Endothelial cell of umbilical vein (primary cell): ENCODE measurements at regions of chr4 and their contacts with region 1.

Region 1: GRCh38 chr4:109815151-109816081 is at the start of gene GAR1:
- DNase-seq: peak; percentile 94
- H3K4me3 ChIP-seq: peak within 1 kb of the TSS; percentile 35 to 92 (median 70)
- H3K27ac ChIP-seq: peak within 1 kb of the TSS; percentile 67
- H3K4me1 ChIP-seq: peaks cover 13% of the 10 kb centered on the region
- H3K27me3 ChIP-seq: no peaks in the 10 kb centered on the region
- CTCF ChIP-seq: no peak
- POLR2A ChIP-seq: peak; percentile 52
- total RNA-seq, gene GAR1: 27.7 and 29.1 TPM in 2 replicates

Region 2: GRCh38 chr4:108674356-108674977 is 1140.9 kb before region 1 on chr4:
- CTCF ChIA-PET with region 1: no interaction called
- POLR2A ChIA-PET with region 1: no interaction called
- dilution Hi-C with region 1: no loop called
- intact Hi-C with region 1: loop called (anchors 10 kb)
- DNase-seq: no peak
- H3K4me3 ChIP-seq: no peak overlapping the region
- H3K27ac ChIP-seq: no peak overlapping the region
- H3K4me1 ChIP-seq: no peaks in the 10 kb centered on the region
- H3K27me3 ChIP-seq: no peaks in the 10 kb centered on the region
- CTCF ChIP-seq: no peak
- POLR2A ChIP-seq: no peak

Region 3: DNA sequence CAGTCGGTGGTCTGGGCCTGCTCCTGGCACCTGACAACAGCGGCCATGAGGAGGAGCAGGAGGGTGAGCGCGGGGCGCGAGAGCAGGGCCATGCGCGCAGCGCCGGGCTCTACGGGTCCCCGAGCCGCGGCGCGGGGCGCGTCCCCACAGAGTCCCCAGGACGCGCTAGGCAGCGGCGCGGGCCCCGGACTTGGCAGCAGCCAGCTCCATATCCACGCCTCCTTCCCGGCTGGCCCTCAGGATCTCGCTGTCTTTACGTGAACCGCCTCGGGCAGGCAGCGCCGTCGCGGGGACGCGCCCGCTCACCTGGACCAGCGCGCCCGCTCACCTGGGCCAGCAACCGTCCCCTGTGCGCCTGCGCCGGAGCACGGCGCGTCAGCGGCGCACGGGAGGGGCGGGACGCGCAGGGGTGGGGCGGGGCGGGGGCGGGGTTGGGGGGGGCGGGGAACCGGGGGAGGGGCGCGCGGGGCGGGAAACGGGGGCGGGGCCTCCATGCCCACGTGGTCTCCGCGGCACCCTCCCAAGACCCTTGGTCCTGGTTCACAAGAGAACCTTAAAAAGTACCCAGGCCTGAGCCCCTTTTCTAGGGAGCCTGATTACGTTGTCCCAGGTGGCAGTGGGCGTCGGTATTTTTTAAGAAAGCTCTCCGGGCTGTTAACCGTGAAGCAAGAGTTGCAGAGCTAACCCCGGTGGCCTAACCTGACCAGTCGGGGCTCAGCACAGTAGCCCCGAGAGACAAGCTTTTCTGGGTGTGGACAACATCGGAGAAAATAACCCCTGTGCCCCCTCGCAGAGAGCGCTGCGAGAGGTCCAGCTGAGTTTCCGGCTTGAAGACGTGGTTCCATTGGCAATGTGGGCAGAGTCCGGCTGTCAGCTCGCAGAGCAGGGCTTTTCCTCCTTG is 85.4 kb before region 1 on chr4 and contains the start of gene PLA2G12A:
- CTCF ChIA-PET with region 1: no interaction called
- POLR2A ChIA-PET with region 1: no interaction called
- dilution Hi-C with region 1: no loop called
- intact Hi-C with region 1: loop called (anchors 1 kb)
- DNase-seq: peak; percentile 75
- H3K4me3 ChIP-seq: peak within 1 kb of the TSS; percentile 86 to 92 (median 86)
- H3K27ac ChIP-seq: peak within 1 kb of the TSS; percentile 48
- H3K4me1 ChIP-seq: peaks cover 9% of the 10 kb centered on the region
- H3K27me3 ChIP-seq: no peaks in the 10 kb centered on the region
- CTCF ChIP-seq: no peak
- POLR2A ChIP-seq: no peak
- total RNA-seq, gene PLA2G12A: 16.6 and 21.6 TPM in 2 replicates

Region 4: GRCh38 chr4:109803924-109804571 is 11.4 kb before region 1 on chr4:
- CTCF ChIA-PET with region 1: interaction called, 6 read pairs
- POLR2A ChIA-PET with region 1: no interaction called
- dilution Hi-C with region 1: no loop called
- intact Hi-C with region 1: loop called (anchors 1 kb)
- DNase-seq: peak; percentile 56
- H3K4me3 ChIP-seq: no peak overlapping the region
- H3K27ac ChIP-seq: no peak overlapping the region
- H3K4me1 ChIP-seq: peaks cover 12% of the 10 kb centered on the region
- H3K27me3 ChIP-seq: no peaks in the 10 kb centered on the region
- CTCF ChIP-seq: peak; percentile 27 to 34
- POLR2A ChIP-seq: no peak